Cardiac septum (tissue), 1 donor: ENCODE measurements at regions of chrX and their contacts with region 1.

Region 1: GRCh38 chrX:77910108-77910840 is at the start of gene ATP7A:
- DNase-seq: peak; percentile 93
- total RNA-seq, gene ATP7A: 6.6 TPM

Region 2: GRCh38 chrX:77675986-77676385 is 234.3 kb before region 1 on chrX:
- intact Hi-C with region 1: no loop called
- DNase-seq: no peak

Region 3: DNA sequence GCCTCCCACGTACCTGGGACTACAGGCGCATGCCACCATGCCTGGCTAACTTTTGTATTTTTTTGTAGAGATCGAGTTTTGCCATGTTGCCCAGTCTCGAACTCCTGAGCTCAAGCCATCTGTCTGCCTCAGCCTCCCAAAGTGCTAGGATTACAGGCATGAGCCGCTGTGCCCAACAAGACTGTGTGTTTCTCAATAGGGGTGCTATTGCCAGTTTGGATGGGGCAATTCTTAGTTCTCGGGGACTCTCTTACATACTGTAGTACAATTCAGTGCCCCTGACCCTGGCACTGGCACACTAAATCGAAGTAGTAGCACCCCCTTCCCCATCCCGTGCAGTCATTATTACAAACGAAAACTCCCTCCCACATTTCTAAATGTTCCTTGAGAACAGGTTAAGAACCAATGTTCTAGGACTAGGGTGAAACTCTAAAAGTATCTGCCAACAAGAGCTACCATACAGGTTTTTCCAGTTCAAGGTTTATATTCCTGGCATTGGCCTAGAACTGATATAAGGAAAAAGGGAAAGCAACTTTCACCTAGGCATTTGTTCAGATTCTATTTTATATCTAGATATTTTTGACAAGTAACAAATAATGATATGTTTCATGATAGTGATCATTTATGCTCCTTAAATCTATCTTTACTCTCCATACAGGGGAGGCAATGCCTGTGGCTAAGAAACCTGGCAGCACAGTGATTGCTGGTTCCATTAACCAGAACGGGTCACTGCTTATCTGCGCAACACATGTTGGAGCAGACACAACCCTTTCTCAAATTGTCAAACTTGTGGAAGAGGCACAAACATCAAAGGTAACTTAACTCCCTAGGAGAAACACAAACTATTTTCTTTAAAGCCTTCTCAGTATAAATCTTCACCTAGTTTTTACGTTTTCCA is 109.6 kb after region 1 on chrX:
- intact Hi-C with region 1: no loop called
- DNase-seq: no peak

Region 4: DNA sequence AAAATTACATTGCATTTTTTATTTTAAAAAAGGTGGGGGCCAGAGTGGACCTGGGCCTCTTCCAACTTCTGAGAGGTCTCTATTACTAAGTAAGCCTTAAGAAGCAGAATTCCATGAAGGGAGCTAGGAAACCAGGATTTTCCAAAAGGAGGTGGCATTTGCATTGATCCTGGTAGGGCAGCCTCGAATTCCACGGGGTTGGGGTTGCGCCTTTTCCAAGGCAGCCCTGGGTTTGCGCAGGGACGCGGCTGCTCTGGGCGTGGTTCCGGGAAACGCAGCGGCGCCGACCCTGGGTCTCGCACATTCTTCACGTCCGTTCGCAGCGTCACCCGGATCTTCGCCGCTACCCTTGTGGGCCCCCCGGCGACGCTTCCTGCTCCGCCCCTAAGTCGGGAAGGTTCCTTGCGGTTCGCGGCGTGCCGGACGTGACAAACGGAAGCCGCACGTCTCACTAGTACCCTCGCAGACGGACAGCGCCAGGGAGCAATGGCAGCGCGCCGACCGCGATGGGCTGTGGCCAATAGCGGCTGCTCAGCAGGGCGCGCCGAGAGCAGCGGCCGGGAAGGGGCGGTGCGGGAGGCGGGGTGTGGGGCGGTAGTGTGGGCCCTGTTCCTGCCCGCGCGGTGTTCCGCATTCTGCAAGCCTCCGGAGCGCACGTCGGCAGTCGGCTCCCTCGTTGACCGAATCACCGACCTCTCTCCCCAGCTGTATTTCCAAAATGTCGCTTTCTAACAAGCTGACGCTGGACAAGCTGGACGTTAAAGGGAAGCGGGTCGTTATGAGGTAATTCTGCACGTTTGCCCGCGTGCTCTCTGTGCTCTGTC is 193.6 kb after region 1 on chrX and contains the start of gene PGK1:
- intact Hi-C with region 1: loop called (anchors 2 kb)
- DNase-seq: peak; percentile 97
- total RNA-seq, gene PGK1: 399 TPM